ENCODE measurements at regions of chr1 and their contacts with region 1.

Region 1: GRCh38 chr1:27603681-27604578 is at the start of gene AHDC1:
- DNase-seq: peak; percentile 88 to 97 (median 91)
- ATAC-seq: peak; percentile 76 to 85 (median 80)
- H3K4me3 ChIP-seq: peak within 1 kb of the TSS; percentile 72 to 100 (median 88)
- H3K27ac ChIP-seq: peak within 1 kb of the TSS; percentile 76 to 85 (median 80)
- H3K4me1 ChIP-seq: peaks cover 6 to 23% (median 18%) of the 10 kb centered on the region in 3 donors
- H3K27me3 ChIP-seq: no peaks in the 10 kb centered on the region
- CTCF ChIP-seq: no peak
- total RNA-seq, gene AHDC1: 10.4 to 22.4 (median 13.7) TPM

Region 2: DNA sequence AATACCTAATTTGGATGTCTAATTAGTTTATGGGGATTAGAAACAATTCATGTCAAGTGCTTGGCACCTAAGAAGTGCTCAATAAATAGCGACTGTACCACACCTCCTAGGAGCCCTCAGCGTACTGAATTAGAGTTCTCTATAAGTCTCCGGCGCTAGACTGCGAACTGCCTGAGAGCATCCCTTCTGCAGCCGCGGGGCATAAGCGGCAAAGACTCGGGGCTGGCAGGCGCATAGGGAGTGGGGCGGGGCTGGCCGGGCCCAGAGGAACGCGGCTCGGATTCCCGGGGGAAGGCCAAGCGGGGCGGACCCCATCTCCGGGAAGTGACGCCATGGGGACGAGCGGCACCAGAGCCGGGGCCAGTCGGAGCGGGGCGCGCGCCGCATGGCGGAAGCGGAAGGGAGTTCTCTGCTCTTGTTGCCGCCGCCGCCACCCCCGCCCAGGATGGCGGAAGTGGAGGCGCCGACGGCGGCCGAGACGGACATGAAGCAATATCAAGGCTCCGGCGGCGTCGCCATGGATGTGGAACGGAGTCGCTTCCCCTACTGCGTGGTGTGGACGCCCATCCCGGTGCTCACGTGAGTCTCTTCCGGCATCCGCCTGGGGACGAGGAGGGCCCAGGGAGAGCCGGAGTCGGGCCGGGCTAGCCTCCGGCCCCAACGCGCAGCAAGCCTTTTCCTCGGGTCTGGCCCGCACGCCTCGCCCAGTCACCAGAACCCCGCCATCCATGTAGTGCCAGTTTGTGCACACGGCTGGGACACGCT is 281.9 kb before region 1 on chr1 and contains the start of gene TMEM222:
- intact Hi-C with region 1: no loop called
- DNase-seq: peak; percentile 96 to 99 (median 98)
- ATAC-seq: peak; percentile 99 to 100 (median 99)
- H3K4me3 ChIP-seq: peak within 1 kb of the TSS; percentile 70 to 94 (median 88)
- H3K27ac ChIP-seq: peak within 1 kb of the TSS; percentile 61 to 81 (median 77)
- H3K4me1 ChIP-seq: peaks cover 0 to 17% (median 7%) of the 10 kb centered on the region in 3 donors
- H3K27me3 ChIP-seq: no peaks in the 10 kb centered on the region
- CTCF ChIP-seq: peak in 2 of 4 donors; percentile 25 to 30
- total RNA-seq, gene TMEM222: 11.9 to 22.1 (median 14.4) TPM

Region 3: DNA sequence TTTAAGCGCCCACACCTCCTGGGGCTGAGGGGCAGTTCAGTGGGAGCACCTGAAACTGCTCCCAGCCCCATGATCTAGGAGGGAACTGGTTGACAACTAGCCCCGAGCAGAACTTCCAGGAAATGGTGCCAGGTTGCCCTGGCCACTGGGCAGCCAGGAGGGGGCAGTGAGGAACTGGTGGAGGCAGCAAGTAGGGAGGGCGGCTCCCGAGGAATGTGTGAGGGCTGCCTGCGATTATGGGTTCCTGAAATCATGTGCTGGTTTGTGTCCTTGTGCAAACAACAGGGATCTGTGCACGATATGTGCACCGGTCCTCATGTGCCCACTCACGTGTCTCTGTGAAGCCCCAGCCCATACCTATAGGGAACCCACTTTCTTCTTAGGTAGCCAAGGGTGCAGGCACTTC is 201.6 kb before region 1 on chr1:
- intact Hi-C with region 1: loop called in 1 of 3 experiments (anchors 5 kb)
- DNase-seq: peak; percentile 65 to 84 (median 74)
- ATAC-seq: peak; percentile 54 to 87 (median 76)
- H3K4me3 ChIP-seq: no peak overlapping the region
- H3K27ac ChIP-seq: peak overlapping the region in 2 of 4 donors; percentile 44 to 63
- H3K4me1 ChIP-seq: peaks cover 0 to 10% (median 0%) of the 10 kb centered on the region in 3 donors
- H3K27me3 ChIP-seq: no peaks in the 10 kb centered on the region
- CTCF ChIP-seq: peak in 3 of 4 donors; percentile 17 to 43 (median 30)

Region 4: GRCh38 chr1:27413004-27413403 is 190.9 kb before region 1 on chr1:
- intact Hi-C with region 1: loop called in 1 of 3 experiments (anchors 5 kb)
- DNase-seq: no peak
- ATAC-seq: peak in 1 of 4 donors; percentile 8
- H3K4me3 ChIP-seq: no peak overlapping the region
- H3K27ac ChIP-seq: no peak overlapping the region
- H3K4me1 ChIP-seq: peaks cover 0 to 5% (median 0%) of the 10 kb centered on the region in 3 donors
- H3K27me3 ChIP-seq: no peaks in the 10 kb centered on the region
- CTCF ChIP-seq: no peak

Region 5: DNA sequence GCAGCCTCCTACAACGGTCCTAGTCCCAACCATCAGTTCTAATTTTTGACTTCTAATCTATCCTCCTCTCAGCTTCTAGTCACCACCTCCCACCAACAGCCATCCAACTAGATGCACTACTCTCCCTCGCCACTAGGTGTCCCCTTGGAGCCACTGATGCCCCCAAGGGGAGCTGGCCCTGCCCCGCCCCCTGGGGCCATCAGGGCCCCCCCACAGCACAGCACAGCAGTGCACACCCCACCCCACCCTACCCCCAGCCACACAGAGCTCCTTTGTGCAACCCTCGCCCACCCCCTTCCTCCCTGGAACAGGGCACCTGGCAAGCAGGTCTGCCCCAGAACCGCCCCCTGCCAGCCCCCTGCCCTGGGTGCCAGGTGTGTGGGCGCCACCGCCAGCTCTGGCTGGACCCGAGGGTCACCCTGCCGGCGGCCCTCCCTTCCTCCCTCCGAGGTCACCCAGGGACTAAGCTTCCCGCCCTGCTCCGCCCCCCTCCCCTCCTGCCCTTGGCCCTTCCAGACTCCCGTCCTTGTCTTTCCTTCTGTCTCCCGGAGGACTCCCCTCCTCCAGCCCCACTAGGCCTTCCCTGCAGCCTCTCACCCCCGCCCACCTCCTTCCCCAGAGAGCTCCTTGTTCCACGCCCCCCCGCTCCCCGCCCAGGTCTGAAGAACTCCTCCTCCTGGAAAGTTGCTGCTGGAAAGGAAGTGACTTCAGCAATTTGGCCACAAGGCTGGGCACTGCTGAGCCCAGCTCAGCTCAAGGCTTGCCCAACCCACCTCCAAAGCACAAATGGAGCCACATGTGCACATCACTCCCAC is 46.9 kb before region 1 on chr1:
- intact Hi-C with region 1: loop called in 2 of 3 experiments (anchors 2 to 5 kb)
- DNase-seq: peak; percentile 88 to 96 (median 92)
- ATAC-seq: peak; percentile 83 to 85 (median 84)
- H3K4me3 ChIP-seq: peak overlapping the region in 2 of 4 donors; percentile 9 to 30
- H3K27ac ChIP-seq: peak overlapping the region; percentile 28 to 73 (median 62)
- H3K4me1 ChIP-seq: peaks cover 0 to 13% (median 0%) of the 10 kb centered on the region in 3 donors
- H3K27me3 ChIP-seq: no peaks in the 10 kb centered on the region
- CTCF ChIP-seq: peak; percentile 87 to 96 (median 88)

Region 6: DNA sequence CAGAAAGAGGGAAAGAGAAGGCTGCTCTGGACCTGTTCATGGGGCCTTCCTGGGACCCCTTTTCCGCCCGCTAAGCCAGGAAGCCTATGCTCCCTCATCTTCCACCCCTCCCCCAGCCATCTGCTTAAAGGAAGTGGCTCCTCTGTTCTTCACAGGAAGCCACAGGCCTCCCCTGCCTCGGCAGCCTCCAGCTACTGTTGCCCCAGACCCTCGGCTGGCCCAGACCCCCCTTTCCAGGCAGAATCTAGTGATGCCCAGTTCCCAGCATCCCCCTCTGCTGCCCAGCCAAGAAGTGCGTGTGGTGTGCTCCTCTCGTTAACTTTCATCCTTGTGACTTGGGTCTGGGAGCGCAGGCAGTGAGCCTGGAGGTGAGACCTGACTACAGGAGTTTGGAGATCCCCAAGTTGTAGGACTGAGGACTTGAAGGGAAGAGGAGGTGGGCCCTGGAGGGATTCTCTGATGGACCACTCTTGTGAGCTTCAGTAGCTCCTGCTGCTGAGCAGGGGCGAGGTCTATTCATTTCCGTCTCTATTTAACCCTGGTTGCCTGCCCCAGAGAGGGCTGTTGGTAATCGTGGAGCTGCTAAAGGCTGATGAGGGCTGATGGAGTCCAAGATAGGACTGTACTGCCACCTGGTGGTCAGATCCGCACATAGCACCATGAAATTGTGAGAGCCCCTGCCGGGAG is 58.9 kb after region 1 on chr1:
- intact Hi-C with region 1: loop called in 2 of 3 experiments (anchors 5 kb)
- DNase-seq: peak; percentile 59 to 95 (median 84)
- ATAC-seq: peak; percentile 51 to 82 (median 76)
- H3K4me3 ChIP-seq: no peak overlapping the region
- H3K27ac ChIP-seq: no peak overlapping the region
- H3K4me1 ChIP-seq: peaks cover 0 to 3% (median 0%) of the 10 kb centered on the region in 3 donors
- H3K27me3 ChIP-seq: no peaks in the 10 kb centered on the region
- CTCF ChIP-seq: peak; percentile 81 to 91 (median 86)